Ovary (tissue), 10 donors: ENCODE measurements at regions of chr21 and their contacts with region 1.

Region 1: DNA sequence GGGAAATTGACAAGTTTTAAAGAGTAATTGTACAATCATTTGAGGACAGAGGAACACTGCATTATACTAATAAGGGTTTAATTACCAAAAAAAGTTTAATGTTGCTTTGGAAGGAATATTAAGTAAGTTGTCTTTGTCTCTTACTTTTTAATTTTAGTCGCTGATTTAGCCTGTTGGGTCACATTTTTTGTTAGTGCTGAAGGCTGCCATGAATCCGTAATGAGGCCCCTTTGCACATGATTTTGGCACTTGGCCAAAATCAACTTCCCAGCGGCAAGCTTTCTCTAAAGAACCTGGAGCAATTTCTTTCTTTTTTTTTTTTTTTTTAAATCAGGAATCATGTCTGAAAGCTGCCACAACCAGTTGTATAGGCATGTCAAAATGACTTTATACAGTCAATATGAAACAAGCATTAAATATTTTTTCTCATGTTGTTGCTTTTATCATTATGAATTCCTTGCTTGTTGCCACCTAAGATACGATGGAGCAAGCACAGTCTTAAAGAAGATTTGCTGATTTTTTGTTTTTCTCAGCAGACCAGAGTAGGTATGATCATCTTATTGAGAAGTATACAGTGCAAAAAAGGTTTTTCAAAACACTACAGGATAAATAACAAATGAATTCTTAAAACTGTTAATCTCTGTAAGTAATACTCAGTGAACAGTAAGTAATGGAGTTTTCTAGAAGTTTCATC is 690.4 kb downstream of the USP25 start:
- DNase-seq: peak; percentile 53 to 74 (median 67)
- H3K4me3 ChIP-seq: peak overlapping the region; percentile 43
- H3K27ac ChIP-seq: peak overlapping the region; percentile 34 to 87
- H3K4me1 ChIP-seq: peaks cover 7% of the 10 kb centered on the region
- H3K27me3 ChIP-seq: no peaks in the 10 kb centered on the region
- CTCF ChIP-seq: no peak
- EP300 ChIP-seq: no peak
- POLR2A ChIP-seq: no peak

Region 2: GRCh38 chr21:16034446-16035190 is 385.6 kb before region 1 on chr21:
- intact Hi-C with region 1: no loop called
- DNase-seq: no peak
- H3K4me3 ChIP-seq: no peak overlapping the region
- H3K27ac ChIP-seq: no peak overlapping the region
- H3K4me1 ChIP-seq: no peaks in the 10 kb centered on the region
- H3K27me3 ChIP-seq: no peaks in the 10 kb centered on the region
- CTCF ChIP-seq: no peak
- EP300 ChIP-seq: no peak
- POLR2A ChIP-seq: no peak

Region 3: DNA sequence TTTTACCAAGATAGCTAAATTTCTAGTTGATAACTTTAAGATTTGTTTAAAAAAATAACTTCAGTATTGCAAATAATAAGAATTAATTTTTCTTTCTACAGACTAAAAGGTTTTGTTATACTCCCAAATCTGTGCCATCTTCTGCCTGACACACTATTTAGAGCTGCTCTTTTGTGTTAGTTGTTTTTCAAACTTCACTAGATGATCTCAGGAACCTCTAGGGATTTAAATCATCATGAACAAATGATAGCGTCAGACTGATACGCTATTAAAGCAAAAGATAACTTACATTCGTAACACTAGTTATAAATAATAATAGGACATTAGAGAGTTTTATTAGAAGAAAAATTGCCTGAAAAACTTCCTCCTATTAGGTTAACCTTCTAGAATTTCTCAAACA is 849.6 kb after region 1 on chr21:
- intact Hi-C with region 1: loop called in 1 of 4 experiments (anchors 10 kb)
- DNase-seq: no peak
- H3K4me3 ChIP-seq: no peak overlapping the region
- H3K27ac ChIP-seq: peak overlapping the region in 1 of 2 donors; percentile 47
- H3K4me1 ChIP-seq: no peaks in the 10 kb centered on the region
- H3K27me3 ChIP-seq: no peaks in the 10 kb centered on the region
- CTCF ChIP-seq: no peak
- EP300 ChIP-seq: no peak
- POLR2A ChIP-seq: no peak